AG04450 (cell line): ENCODE measurements at regions of chr4 and their contacts with region 1.

Region 1: DNA sequence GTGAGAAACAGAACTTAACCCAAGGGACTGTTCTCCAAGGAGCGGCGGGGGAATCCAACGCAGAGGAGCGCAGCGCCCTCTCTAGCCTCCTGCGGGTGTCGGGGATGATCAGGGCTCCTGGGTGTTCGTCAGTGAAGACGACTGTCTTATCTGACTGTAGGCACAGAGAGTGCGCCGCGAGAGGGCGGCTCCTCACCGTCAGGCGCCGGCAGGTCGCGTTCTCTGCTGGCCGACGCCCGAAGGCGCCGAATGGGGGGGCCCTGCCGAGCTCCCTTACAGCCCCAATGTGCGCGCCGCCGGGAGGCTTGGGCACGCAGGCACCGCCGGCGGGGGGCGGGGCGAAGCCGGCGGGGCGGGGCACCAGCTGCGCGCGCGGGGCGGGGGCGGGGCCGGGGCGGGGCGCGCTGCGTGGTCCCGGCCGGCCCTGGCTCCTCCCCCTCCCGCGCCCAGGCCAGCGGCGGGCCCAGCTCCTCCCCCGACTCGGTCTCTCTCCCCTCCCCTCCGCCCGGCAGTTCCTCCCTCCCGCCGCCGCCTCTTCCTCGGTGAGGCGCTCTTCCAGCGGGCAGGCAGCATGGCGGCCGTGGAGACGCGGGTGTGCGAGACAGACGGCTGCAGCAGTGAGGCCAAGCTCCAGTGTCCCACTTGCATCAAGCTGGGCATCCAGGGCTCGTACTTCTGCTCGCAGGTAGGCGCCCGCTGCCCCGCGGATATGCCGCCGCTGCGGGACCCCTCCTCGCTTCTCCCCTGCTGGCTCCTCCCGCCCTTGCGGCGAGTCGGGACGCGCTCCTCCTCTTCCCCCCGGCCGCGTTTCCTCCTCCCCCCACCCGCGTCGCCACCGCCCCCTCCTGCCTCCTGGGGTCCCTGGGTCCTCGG is at the start of gene METAP1:
- DNase-seq: peak; percentile 80
- H3K4me3 ChIP-seq: peak within 1 kb of the TSS; percentile 93
- H3K27ac ChIP-seq: peak within 1 kb of the TSS; percentile 77
- H3K27me3 ChIP-seq: no peaks in the 10 kb centered on the region
- CTCF ChIP-seq: peak; percentile 59
- polyA plus RNA-seq, gene METAP1: 58.4 and 74.0 TPM in 2 replicates

Region 2: DNA sequence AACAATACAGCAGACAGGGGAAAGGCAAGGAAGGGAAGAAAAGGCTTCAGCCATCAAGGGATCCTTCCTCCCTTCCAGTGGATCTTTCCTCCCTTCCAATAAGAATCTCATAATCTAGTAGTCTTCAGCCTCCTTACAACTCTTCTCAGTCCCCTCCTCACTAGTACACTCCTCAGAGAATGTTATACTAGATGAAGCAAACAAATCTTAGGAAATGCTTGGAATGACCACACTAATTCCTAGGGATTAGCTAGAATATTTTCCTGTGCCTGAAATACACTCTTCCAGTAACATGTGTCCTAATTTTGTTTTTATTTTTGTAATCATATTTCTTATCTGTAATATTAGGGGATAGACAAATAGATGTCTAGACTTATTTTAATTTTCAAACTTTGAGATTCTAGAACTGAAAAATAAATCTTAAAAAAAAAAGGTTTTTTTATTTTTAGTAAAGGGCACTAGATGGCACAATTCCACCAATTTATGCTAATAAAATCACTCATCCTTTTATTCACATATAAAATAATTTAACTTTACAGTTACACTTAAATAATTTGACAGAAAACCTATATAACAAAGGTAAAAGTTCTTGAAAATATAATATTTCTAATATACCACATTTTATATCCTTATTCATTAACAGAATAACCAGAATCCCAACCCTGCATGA is 845.2 kb before region 1 on chr4:
- CTCF ChIA-PET with region 1: interaction called, 12 read pairs
- POLR2A ChIA-PET with region 1: no interaction called
- DNase-seq: no peak
- H3K4me3 ChIP-seq: no peak overlapping the region
- H3K27ac ChIP-seq: no peak overlapping the region
- H3K27me3 ChIP-seq: no peaks in the 10 kb centered on the region
- CTCF ChIP-seq: peak; percentile 28

Region 3: GRCh38 chr4:98928505-98929340 is 66.7 kb before region 1 on chr4 and contains the start of gene EIF4E:
- CTCF ChIA-PET with region 1: interaction called, 9 read pairs
- POLR2A ChIA-PET with region 1: interaction called, 15 read pairs
- DNase-seq: peak; percentile 98
- H3K4me3 ChIP-seq: peak within 1 kb of the TSS; percentile 97
- H3K27ac ChIP-seq: peak within 1 kb of the TSS; percentile 97
- H3K27me3 ChIP-seq: no peaks in the 10 kb centered on the region
- CTCF ChIP-seq: no peak
- polyA plus RNA-seq, gene EIF4E: 72.4 and 94.7 TPM in 2 replicates

Region 4: GRCh38 chr4:98963538-98964433 is 31.6 kb before region 1 on chr4:
- CTCF ChIA-PET with region 1: interaction called, 12 read pairs
- POLR2A ChIA-PET with region 1: no interaction called
- DNase-seq: no peak
- H3K4me3 ChIP-seq: no peak overlapping the region
- H3K27ac ChIP-seq: no peak overlapping the region
- H3K27me3 ChIP-seq: no peaks in the 10 kb centered on the region
- CTCF ChIP-seq: no peak

Region 5: GRCh38 chr4:99008051-99008450 is 12.6 kb after region 1 on chr4:
- CTCF ChIA-PET with region 1: interaction called, 31 read pairs
- POLR2A ChIA-PET with region 1: no interaction called
- DNase-seq: no peak
- H3K4me3 ChIP-seq: no peak overlapping the region
- H3K27ac ChIP-seq: no peak overlapping the region
- H3K27me3 ChIP-seq: no peaks in the 10 kb centered on the region
- CTCF ChIP-seq: no peak